CD8-positive, alpha-beta T cell (primary cell): ENCODE measurements at regions of chr4 and their contacts with region 1.

Region 1: DNA sequence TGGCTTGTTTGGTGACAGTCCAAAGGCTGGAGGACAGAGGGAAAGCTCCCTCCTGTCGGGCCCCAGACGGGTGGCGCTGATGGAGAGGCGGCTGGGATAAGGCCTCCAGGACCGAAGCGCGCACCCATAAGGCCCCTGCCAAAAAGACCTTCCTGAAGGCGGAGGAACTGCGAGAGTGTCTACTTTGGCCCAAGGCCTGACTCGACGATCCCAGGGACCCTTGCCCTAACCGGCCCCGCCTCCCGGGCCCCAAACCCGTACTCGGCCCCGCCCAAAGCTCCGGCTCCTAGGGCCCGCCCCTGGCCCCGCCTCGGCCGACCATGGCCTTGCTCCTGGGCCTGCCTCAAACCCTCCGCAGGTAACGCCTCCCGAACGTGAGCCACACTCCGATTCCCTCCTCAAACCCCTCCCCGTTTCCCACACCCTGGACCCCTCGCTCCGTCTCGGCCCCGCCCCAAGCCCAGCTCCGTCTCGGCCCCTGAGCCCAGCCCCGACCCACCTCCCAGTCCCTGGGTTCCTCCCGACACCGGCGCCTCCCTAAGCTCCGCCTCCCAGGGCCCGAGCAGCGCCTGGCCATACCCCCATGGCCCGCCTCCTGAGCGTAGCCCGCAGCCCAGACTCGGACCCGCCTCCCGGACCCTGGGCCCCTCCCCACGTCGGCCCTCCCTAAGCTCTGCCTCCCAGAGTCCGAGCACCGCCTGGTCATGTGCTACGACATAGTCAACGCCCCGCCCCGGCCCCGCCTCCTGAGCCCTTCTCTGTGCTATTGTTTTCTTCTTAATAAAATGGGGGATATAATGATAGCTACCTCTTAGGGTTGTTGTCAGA is 90.0 kb upstream of the DRD5 start:
- DNase-seq: peak; percentile 79 to 96 (median 89)
- ATAC-seq: peak; percentile 99
- H3K4me3 ChIP-seq: peak overlapping the region; percentile 72 to 75
- H3K4me3 Mint-ChIP-seq: peak overlapping the region; percentile 88
- H3K27ac ChIP-seq: peak overlapping the region; percentile 55 to 76
- H3K27ac Mint-ChIP-seq: peak overlapping the region; percentile 76
- H3K4me1 ChIP-seq: peaks cover 8% of the 10 kb centered on the region
- H3K4me1 Mint-ChIP-seq: peaks cover 28% of the 10 kb centered on the region
- H3K27me3 ChIP-seq: no peaks in the 10 kb centered on the region
- H3K27me3 Mint-ChIP-seq: no peaks in the 10 kb centered on the region
- CTCF ChIP-seq: no peak

Region 2: GRCh38 chr4:9608300-9608699 is 83.2 kb before region 1 on chr4:
- CTCF ChIA-PET with region 1: no interaction called
- POLR2A ChIA-PET with region 1: no interaction called
- intact Hi-C with region 1: loop called in 1 of 2 experiments (anchors 2 kb)
- DNase-seq: peak in 1 of 9 experiments; percentile 15
- ATAC-seq: no peak
- H3K4me3 ChIP-seq: no peak overlapping the region
- H3K4me3 Mint-ChIP-seq: no peak overlapping the region
- H3K27ac ChIP-seq: no peak overlapping the region
- H3K27ac Mint-ChIP-seq: no peak overlapping the region
- H3K4me1 ChIP-seq: peaks cover 10% of the 10 kb centered on the region
- H3K4me1 Mint-ChIP-seq: peaks cover 32% of the 10 kb centered on the region
- H3K27me3 ChIP-seq: no peaks in the 10 kb centered on the region
- H3K27me3 Mint-ChIP-seq: peaks cover 5% of the 10 kb centered on the region
- CTCF ChIP-seq: no peak

Region 3: DNA sequence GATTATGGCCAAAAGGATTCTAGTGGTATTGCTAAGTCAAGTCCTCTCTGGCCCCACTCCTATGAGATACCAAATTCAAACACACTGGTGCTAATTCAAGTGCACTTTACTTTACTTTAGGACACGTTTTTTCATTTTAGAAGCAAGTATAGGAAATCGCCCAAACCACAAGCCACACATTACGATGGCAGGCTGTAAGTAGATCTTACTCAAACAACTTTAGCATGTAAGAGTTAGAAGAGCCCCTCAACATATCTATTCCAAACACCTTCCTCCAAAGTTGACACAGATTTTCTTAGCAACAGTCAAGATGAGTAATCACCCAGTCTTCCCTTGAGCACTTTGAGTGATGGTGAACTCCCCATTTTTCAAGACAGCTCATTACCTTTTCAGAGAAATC is 133.6 kb after region 1 on chr4:
- CTCF ChIA-PET with region 1: no interaction called
- POLR2A ChIA-PET with region 1: no interaction called
- intact Hi-C with region 1: no loop called
- DNase-seq: peak in 1 of 9 experiments; percentile 8
- ATAC-seq: peak; percentile 52
- H3K4me3 ChIP-seq: no peak overlapping the region
- H3K4me3 Mint-ChIP-seq: no peak overlapping the region
- H3K27ac ChIP-seq: no peak overlapping the region
- H3K27ac Mint-ChIP-seq: no peak overlapping the region
- H3K4me1 ChIP-seq: no peaks in the 10 kb centered on the region
- H3K4me1 Mint-ChIP-seq: peaks cover 12% of the 10 kb centered on the region
- H3K27me3 ChIP-seq: no peaks in the 10 kb centered on the region
- H3K27me3 Mint-ChIP-seq: no peaks in the 10 kb centered on the region
- CTCF ChIP-seq: no peak